BJ (cell line): ENCODE measurements at regions of chr14 and their contacts with region 1.

Region 1: DNA sequence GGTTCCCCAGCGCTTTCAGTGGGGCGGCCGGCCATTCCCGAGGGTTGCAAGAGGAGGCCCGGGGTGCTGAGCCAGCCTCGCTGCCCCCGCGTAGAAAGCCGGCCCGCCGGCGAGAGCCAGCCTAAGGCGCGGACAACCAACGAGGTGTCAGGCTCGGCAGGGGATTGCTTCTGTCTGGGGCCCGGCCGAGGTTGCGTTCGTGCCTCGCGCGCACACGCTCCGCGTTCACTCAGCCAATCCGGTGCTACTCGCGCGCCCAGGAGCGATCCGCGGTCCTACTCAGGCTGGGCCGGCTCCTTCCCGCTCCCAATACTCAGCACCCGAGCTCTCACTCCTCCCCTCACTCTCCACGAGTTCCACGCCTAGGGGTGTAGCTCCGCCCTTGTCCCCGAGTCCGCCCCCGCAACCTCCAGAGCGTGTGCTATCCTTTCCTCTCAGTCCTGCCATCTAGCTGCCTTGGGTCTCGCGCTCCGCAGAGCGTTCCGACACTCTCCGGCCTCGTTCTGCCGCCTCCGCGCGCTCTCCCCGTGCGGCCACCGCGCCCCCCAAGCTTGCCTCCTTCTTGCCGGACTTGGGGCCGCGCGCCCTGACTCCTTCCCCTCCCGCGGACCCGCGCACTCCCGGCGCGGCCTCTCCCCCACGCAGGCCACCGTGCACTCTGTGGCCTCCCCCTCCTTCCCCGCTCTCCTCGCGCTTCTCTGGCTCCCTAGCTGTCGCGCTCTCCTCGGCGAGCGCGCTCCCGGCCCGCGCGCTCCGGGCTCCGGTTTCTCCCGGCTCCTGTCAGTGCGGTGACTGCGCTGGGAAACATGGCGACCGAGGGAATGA is at the start of gene GPHN:
- DNase-seq: peak; percentile 92
- H3K4me3 ChIP-seq: peak within 1 kb of the TSS; percentile 85
- H3K27me3 ChIP-seq: no peaks in the 10 kb centered on the region
- CTCF ChIP-seq: peak; percentile 52
- polyA plus RNA-seq, gene GPHN: 7.2 and 7.7 TPM in 2 replicates

Region 2: GRCh38 chr14:66425402-66425801 is 82.5 kb before region 1 on chr14:
- CTCF ChIA-PET with region 1: no interaction called
- POLR2A ChIA-PET with region 1: no interaction called
- DNase-seq: no peak
- H3K4me3 ChIP-seq: no peak overlapping the region
- H3K27me3 ChIP-seq: no peaks in the 10 kb centered on the region
- CTCF ChIP-seq: no peak

Region 3: GRCh38 chr14:66496188-66496807 is 11.6 kb before region 1 on chr14:
- CTCF ChIA-PET with region 1: interaction called, 12 read pairs
- POLR2A ChIA-PET with region 1: interaction called, 3 read pairs
- DNase-seq: no peak
- H3K4me3 ChIP-seq: no peak overlapping the region
- H3K27me3 ChIP-seq: no peaks in the 10 kb centered on the region
- CTCF ChIP-seq: no peak

Region 4: GRCh38 chr14:66539034-66539433 is 31.1 kb after region 1 on chr14:
- CTCF ChIA-PET with region 1: no interaction called
- POLR2A ChIA-PET with region 1: no interaction called
- DNase-seq: no peak
- H3K4me3 ChIP-seq: no peak overlapping the region
- H3K27me3 ChIP-seq: no peaks in the 10 kb centered on the region
- CTCF ChIP-seq: no peak